Lower leg skin (tissue), 4 donors: ENCODE measurements at regions of chr11 and their contacts with region 1.

Region 1: GRCh38 chr11:30292545-30292944 is 30.4 kb upstream of the ARL14EP start:
- DNase-seq: no peak
- H3K4me3 ChIP-seq: no peak overlapping the region
- CTCF ChIP-seq: peak in 1 of 3 donors; percentile 73
- POLR2A ChIP-seq: no peak

Region 2: DNA sequence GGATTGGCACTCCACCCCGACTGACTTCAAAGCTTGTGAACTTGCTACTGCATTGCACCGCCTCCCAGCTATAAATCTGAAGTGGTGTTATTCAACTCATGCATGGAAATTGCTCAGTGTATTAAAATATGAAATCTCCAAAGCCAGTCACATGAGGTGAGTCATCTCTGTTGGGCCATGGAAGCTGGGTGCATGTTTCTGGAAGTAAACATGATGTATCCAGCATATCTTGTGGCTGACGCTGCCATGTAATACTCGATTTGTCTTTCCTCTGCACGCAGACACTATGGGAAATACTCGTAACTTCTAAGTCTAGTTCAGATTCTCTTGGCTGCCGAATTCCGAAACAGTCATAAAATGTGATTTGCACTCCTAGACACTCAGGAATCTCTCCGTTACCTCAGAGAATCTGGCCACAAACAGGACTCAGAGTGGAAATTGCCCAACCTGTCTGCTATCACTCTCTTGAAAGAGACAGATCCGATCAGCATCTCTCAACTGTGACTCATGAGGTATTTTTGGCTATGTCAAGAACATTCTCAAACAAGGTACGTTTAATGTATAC is 448.6 kb after region 1 on chr11:
- intact Hi-C with region 1: no loop called
- DNase-seq: peak in 1 of 2 donors; percentile 17
- H3K4me3 ChIP-seq: no peak overlapping the region
- CTCF ChIP-seq: no peak
- POLR2A ChIP-seq: no peak

Region 3: DNA sequence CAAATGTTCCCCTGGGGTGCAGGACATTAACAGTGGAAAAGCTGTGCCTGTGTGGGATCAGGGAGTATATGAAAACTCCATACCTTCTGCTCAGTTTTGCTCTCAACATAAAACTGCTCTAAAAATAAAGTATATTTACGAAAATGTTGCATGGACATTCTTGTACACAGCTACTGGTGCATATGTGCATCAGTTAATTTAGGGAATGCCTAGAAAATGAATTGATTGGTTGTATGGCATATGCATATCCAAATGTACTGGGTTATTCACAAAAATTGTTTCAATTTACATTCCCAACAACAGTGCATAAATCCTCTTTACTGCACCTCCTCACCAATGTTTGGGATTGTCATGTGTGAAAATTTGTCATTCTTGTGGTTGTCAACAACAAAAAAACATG is 544.7 kb after region 1 on chr11:
- intact Hi-C with region 1: loop called (anchors 5 kb)
- DNase-seq: no peak
- H3K4me3 ChIP-seq: no peak overlapping the region
- CTCF ChIP-seq: no peak
- POLR2A ChIP-seq: no peak